Calu3 (cell line): ENCODE measurements at regions of chr11 and their contacts with region 1.

Region 1: GRCh38 chr11:107840129-107840484 is 18.5 kb downstream of the SLC35F2 start:
- DNase-seq: peak; percentile 10
- H3K4me3 Mint-ChIP-seq: peak overlapping the region; percentile 59
- H3K27ac Mint-ChIP-seq: peak overlapping the region; percentile 85
- H3K4me1 Mint-ChIP-seq: peaks cover 43% of the 10 kb centered on the region
- H3K27me3 Mint-ChIP-seq: no peaks in the 10 kb centered on the region
- CTCF ChIP-seq: no peak

Region 2: GRCh38 chr11:107490836-107491235 is 349.3 kb before region 1 on chr11:
- CTCF ChIA-PET with region 1: no interaction called
- intact Hi-C with region 1: no loop called
- DNase-seq: no peak
- H3K4me3 Mint-ChIP-seq: no peak overlapping the region
- H3K27ac Mint-ChIP-seq: no peak overlapping the region
- H3K4me1 Mint-ChIP-seq: peaks cover 9% of the 10 kb centered on the region
- H3K27me3 Mint-ChIP-seq: no peaks in the 10 kb centered on the region
- CTCF ChIP-seq: no peak

Region 3: GRCh38 chr11:107696140-107696539 is 144.0 kb before region 1 on chr11:
- CTCF ChIA-PET with region 1: no interaction called
- intact Hi-C with region 1: no loop called
- DNase-seq: no peak
- H3K4me3 Mint-ChIP-seq: no peak overlapping the region
- H3K27ac Mint-ChIP-seq: no peak overlapping the region
- H3K4me1 Mint-ChIP-seq: no peaks in the 10 kb centered on the region
- H3K27me3 Mint-ChIP-seq: no peaks in the 10 kb centered on the region
- CTCF ChIP-seq: no peak

Region 4: GRCh38 chr11:107799218-107799859 is 40.8 kb before region 1 on chr11:
- CTCF ChIA-PET with region 1: no interaction called
- intact Hi-C with region 1: loop called (anchors 5 kb)
- DNase-seq: peak; percentile 68
- H3K4me3 Mint-ChIP-seq: no peak overlapping the region
- H3K27ac Mint-ChIP-seq: no peak overlapping the region
- H3K4me1 Mint-ChIP-seq: no peaks in the 10 kb centered on the region
- H3K27me3 Mint-ChIP-seq: no peaks in the 10 kb centered on the region
- CTCF ChIP-seq: peak; percentile 68

Region 5: DNA sequence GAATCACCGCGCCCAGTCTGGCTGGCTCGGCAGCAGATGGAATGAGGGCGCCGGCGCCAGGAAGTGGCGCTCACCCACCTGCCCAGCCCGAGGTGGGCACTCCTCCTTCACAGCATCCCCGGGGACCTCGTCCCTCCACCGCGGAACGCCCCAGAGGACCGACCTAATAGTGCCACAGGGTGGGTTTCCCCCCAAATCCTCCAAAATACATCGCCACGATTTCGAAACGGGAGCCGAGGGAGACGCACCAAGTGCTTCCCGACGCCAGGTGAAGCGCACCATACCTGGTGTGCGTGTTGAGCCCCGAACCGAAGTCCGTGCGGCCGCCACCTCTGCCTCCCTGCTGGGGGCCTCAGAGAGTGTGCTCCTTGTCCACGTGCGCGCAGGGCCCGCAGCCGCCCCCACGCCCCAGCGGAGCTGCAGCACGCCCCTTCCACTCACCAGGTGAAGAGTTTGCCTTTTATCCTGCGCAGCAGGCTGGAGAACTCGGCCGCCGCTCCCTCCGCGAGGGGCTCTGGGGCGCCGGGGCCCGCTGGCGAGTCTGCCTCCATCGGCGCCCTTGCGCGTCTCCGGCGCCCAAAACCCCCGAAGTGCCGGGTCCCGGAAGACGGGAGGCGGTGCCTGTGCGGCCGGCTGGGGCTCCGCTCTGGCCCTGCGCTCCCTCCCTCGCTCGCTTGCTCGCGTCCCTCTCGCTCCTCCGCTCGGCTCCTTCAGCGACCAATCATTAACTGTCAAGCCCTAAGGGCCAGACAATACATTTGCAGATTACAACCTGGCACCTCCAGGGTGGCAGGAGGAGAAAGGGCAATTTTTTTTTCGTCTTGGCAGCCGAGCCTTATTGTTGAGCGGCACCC is 18.3 kb after region 1 on chr11 and contains the start of gene SLC35F2:
- CTCF ChIA-PET with region 1: no interaction called
- intact Hi-C with region 1: loop called (anchors 2 kb)
- DNase-seq: peak; percentile 76
- H3K4me3 Mint-ChIP-seq: peak within 1 kb of the TSS; percentile 91
- H3K27ac Mint-ChIP-seq: peak within 1 kb of the TSS; percentile 92
- H3K4me1 Mint-ChIP-seq: no peaks in the 10 kb centered on the region
- H3K27me3 Mint-ChIP-seq: no peaks in the 10 kb centered on the region
- CTCF ChIP-seq: no peak
- total RNA-seq, gene SLC35F2: 24.4 and 34.5 TPM in 2 replicates